Testis (tissue), 5 donors: ENCODE measurements at regions of chr3 and their contacts with region 1.

Region 1: DNA sequence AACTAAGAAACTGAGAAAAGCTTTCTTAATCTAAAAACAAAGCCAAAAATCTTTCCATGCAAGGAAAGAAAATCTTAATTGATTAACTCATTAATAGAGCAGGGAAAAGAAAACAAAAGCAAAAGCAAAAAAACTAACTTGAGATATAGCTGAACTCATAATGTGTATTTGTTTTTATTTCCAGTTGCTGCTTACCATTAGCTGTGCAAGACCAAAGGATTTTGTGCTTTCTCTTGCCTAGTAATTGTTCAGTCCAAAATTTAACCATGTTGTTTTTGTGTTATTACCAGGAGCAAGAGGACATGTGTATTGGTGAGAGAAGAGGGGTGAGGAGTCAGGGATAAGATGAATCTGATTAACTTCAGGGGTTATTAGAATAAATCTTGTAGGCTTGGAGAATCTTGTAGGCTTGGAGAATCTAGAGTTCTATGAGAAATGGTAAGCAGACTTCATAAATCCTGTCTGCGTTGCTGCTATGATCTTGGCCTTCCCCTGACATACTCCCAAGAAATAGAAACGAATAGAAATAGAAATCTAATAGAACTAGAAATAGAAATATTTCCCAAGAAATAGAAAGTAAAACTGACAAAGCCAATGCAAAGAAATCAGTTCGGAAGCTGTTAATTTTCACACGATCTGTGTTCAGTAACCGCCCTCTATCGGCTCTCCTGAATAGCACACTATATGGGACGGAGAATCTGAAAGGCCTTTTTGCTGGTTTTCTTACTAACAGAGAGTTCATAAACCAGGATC is 72.6 kb upstream of the TNFSF10 start:
- DNase-seq: peak; percentile 58
- H3K4me3 ChIP-seq: no peak overlapping the region
- H3K27ac ChIP-seq: peak overlapping the region in 1 of 2 donors; percentile 66
- H3K4me1 ChIP-seq: peaks cover 11% of the 10 kb centered on the region
- H3K27me3 ChIP-seq: no peaks in the 10 kb centered on the region
- CTCF ChIP-seq: peak; percentile 63 to 78 (median 65)
- POLR2A ChIP-seq: no peak

Region 2: DNA sequence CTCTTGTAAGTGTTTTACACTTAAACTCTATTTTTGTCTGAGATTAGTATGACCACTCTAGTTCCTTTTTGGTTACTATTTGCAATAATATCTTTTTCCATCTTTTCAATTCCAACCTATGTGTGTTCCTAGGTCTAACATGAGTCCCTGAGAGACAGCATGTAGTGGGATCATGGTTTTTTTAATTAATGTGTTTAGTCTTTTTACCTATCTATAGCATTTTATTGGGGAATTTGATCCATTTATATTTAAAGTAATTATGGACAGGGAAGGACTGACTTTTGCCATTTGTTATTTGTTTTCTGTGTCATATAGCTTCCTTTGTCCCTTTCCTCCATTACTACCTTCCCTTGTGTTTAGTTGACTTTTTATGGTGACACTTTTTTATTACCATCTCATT is 94.3 kb before region 1 on chr3:
- intact Hi-C with region 1: loop called (anchors 10 kb)
- DNase-seq: no peak
- H3K4me3 ChIP-seq: no peak overlapping the region
- H3K27ac ChIP-seq: no peak overlapping the region
- H3K4me1 ChIP-seq: no peaks in the 10 kb centered on the region
- H3K27me3 ChIP-seq: no peaks in the 10 kb centered on the region
- CTCF ChIP-seq: no peak
- POLR2A ChIP-seq: no peak

Region 3: GRCh38 chr3:173275740-173276139 is 679.9 kb after region 1 on chr3:
- intact Hi-C with region 1: no loop called
- DNase-seq: peak; percentile 40
- H3K4me3 ChIP-seq: peak overlapping the region in 1 of 2 donors; percentile 7
- H3K27ac ChIP-seq: no peak overlapping the region
- H3K4me1 ChIP-seq: no peaks in the 10 kb centered on the region
- H3K27me3 ChIP-seq: no peaks in the 10 kb centered on the region
- CTCF ChIP-seq: no peak
- POLR2A ChIP-seq: no peak